ENCODE measurements at regions of chr12 and their contacts with region 1.

Region 1: DNA sequence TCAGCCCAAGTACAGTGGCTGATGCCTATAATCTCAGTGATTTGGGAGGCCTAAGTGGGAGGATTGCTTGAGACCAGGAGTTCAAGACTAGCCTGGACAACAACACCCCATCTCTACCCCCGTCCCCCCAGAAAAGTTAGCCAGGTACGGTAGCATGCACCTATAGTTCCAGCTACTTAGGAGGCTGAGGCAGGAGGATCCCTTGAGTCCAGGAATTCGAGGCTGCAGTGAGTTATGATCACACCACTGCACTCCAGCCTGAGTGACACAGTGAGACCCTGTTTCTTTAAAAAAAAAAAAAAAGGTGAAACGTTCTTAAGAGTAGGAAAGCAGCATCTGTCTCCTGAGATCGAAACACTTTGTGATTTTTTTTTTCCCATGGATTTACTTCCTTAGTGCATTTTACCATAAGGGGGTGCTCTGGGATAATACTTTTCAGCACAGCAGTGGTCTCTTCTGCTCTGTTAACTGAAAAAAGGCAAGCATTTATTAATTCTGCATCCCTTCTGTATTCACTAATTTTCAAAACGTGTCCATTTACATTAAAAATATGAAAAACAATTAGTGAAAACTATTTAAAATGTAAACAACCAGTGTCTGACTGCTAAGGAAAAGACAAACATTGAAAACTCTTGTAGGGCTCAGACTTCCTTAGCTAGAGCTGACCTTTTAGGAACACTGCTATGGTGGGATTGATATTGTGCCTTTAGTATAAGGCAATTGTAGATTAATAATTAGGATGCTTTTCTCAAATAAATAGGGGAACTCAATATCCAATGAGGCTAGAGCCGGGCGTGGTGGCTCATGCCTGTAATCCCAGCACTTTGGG is 31.2 kb upstream of the USP44 start:
- DNase-seq: no peak
- ATAC-seq: no peak
- H3K4me3 ChIP-seq: no peak overlapping the region
- H3K27ac ChIP-seq: no peak overlapping the region
- H3K4me1 ChIP-seq: no peaks in the 10 kb centered on the region
- H3K27me3 ChIP-seq: no peaks in the 10 kb centered on the region
- CTCF ChIP-seq: peak in 2 of 5 experiments; percentile 41 to 48
- POLR2A ChIP-seq: no peak

Region 2: DNA sequence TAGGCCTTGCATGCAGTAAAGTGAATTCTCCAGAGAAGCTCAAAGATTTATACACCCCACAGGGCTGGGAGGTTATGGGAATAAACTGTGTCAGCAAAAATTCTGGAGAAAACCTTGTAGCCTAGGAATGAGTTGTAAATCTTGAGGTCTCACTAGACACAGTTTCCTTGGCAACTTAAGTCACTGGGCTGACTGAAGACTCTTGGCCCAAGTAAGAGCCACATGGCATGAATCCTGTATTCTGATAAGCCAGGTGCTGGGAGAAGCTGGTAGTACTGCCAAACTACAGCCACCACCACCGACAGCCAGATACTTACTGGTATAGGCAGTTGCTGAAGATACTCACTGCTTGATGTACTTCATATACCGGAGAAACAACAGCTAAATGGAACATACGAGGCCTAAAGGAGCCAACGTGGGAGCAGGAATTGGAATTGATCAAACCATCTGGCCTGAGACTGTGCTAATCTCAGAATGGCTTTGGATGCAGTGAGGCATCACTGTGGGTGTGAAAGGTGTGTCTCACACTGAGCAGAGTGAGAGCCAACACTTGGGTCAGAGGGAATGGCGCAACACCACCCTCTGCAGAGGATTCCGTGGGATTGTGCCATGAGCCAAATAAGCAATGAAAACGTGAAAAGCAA is 829.3 kb before region 1 on chr12:
- in situ Hi-C with region 1: no loop called
- intact Hi-C with region 1: no loop called
- DNase-seq: no peak
- ATAC-seq: peak in 1 of 2 donors; percentile 45
- H3K4me3 ChIP-seq: no peak overlapping the region
- H3K27ac ChIP-seq: no peak overlapping the region
- H3K4me1 ChIP-seq: no peaks in the 10 kb centered on the region
- H3K27me3 ChIP-seq: no peaks in the 10 kb centered on the region
- CTCF ChIP-seq: no peak
- POLR2A ChIP-seq: no peak

Region 3: GRCh38 chr12:95014554-95014953 is 567.9 kb before region 1 on chr12:
- in situ Hi-C with region 1: no loop called
- intact Hi-C with region 1: no loop called
- DNase-seq: no peak
- ATAC-seq: no peak
- H3K4me3 ChIP-seq: no peak overlapping the region
- H3K27ac ChIP-seq: no peak overlapping the region
- H3K4me1 ChIP-seq: no peaks in the 10 kb centered on the region
- H3K27me3 ChIP-seq: no peaks in the 10 kb centered on the region
- CTCF ChIP-seq: no peak
- POLR2A ChIP-seq: no peak

Region 4: DNA sequence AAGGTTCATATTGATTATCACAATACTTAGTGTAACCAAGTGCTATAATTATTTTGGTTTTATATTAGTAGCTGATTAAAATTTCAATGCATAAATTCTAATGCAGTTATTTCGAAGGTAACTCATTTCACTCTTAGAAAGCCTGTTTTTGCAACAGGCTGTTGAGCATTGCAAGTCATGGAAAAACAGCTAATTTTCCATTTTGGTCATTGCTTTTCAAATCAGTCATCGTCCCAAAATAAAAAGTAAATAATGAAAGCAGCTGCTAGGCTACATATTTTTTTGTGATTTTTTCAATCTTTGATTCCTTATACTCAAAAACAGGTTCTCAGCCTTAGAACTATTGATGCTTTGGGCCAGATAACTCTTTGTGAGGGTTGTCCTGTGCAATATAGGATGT is 341.9 kb before region 1 on chr12:
- in situ Hi-C with region 1: no loop called
- intact Hi-C with region 1: no loop called
- DNase-seq: no peak
- ATAC-seq: no peak
- H3K4me3 ChIP-seq: no peak overlapping the region
- H3K27ac ChIP-seq: no peak overlapping the region
- H3K4me1 ChIP-seq: peaks cover 47 to 49% of the 10 kb centered on the region in 2 donors
- H3K27me3 ChIP-seq: no peaks in the 10 kb centered on the region
- CTCF ChIP-seq: no peak
- POLR2A ChIP-seq: no peak

Region 5: GRCh38 chr12:95336390-95337067 is 245.9 kb before region 1 on chr12:
- in situ Hi-C with region 1: no loop called
- intact Hi-C with region 1: no loop called
- DNase-seq: peak; percentile 55 to 75
- ATAC-seq: peak; percentile 95 to 97
- H3K4me3 ChIP-seq: peak overlapping the region in 1 of 4 donors; percentile 9
- H3K27ac ChIP-seq: peak overlapping the region; percentile 2 to 42 (median 38)
- H3K4me1 ChIP-seq: peaks cover 0 to 18% of the 10 kb centered on the region in 2 donors
- H3K27me3 ChIP-seq: no peaks in the 10 kb centered on the region
- CTCF ChIP-seq: peak; percentile 69 to 95 (median 92)
- POLR2A ChIP-seq: no peak

Region 6: DNA sequence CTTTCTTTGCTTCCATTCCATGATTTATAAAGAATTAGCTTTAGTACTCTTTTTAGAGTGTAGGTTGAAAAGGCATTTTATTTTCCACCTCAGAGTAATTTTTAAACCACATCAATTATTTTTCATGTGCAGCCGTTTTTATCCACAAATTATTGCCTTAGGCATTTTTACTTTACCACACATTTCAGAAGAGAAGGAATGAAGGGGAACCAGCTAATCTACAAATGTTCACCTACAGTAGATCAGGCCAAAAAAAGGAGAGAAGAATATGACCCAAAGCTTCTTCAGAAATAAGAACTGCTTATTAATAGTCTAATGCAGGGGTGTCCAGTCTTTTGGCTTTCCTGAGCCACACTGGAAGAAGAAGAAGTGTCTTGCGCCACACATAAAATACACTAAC is 228.0 kb after region 1 on chr12:
- in situ Hi-C with region 1: loop called (anchors 5 to 10 kb)
- intact Hi-C with region 1: loop called (anchors 1 kb)
- DNase-seq: no peak
- ATAC-seq: no peak
- H3K4me3 ChIP-seq: no peak overlapping the region
- H3K27ac ChIP-seq: no peak overlapping the region
- H3K4me1 ChIP-seq: no peaks in the 10 kb centered on the region
- H3K27me3 ChIP-seq: no peaks in the 10 kb centered on the region
- CTCF ChIP-seq: no peak
- POLR2A ChIP-seq: no peak

Measured in gastrocnemius medialis (tissue), 4 donors.